ENCODE measurements at regions of chr10 and their contacts with region 1.

Region 1: GRCh38 chr10:24344279-24344678 is 135.3 kb downstream of the KIAA1217 start:
- DNase-seq: peak; percentile 44 to 93
- H3K4me3 ChIP-seq: no peak overlapping the region
- H3K27ac ChIP-seq: peak overlapping the region; percentile 47
- H3K4me1 ChIP-seq: peaks cover 24% of the 10 kb centered on the region
- H3K27me3 ChIP-seq: no peaks in the 10 kb centered on the region
- CTCF ChIP-seq: no peak

Region 2: GRCh38 chr10:24209946-24210491 is 134.3 kb before region 1 on chr10:
- CTCF ChIA-PET with region 1: interaction called, 3 read pairs
- POLR2A ChIA-PET with region 1: no interaction called
- intact Hi-C with region 1: loop called (anchors 1 kb)
- DNase-seq: peak in 1 of 2 experiments; percentile 53
- H3K4me3 ChIP-seq: peak overlapping the region; percentile 47; the same call in 1 of the 2 replicates
- H3K27ac ChIP-seq: 0 out of 2 replicates have a peak overlapping the region, but pooled peaks have one; percentile 77
- H3K4me1 ChIP-seq: peaks cover 38% of the 10 kb centered on the region
- H3K27me3 ChIP-seq: no peaks in the 10 kb centered on the region
- CTCF ChIP-seq: no peak

Region 3: DNA sequence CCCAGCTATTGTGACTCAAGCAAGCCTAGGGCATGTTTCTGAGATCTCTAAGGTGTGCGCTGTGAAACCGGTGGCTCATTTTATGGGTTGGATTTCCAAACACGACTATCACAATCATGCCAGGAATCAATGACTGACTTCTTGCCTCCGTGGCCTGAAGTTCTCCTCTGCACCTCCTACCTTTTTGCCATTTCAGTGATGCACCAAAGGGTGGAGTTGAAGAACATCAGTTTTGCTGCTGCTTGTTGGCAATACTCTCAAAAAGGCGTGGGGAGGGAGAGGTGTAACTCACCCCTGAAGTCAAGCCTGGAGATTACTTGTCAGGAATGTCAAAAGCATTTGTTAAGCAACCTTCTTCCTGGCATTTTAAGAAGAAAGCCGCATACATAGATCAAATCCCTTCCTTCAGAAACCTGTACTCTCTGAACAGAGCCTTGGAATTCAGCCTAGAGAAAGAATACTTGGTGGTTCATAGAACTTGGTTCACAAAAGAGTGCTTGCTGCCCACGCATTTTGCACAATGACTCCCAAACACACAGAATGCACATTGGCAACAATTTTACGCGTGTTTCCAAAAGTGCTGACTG is 94.4 kb before region 1 on chr10:
- CTCF ChIA-PET with region 1: no interaction called
- POLR2A ChIA-PET with region 1: no interaction called
- intact Hi-C with region 1: loop called (anchors 2 kb)
- DNase-seq: peak in 1 of 2 experiments; percentile 51
- H3K4me3 ChIP-seq: no peak overlapping the region
- H3K27ac ChIP-seq: 0 out of 2 replicates have a peak overlapping the region, but pooled peaks have one; percentile 17
- H3K4me1 ChIP-seq: peaks cover 40% of the 10 kb centered on the region
- H3K27me3 ChIP-seq: no peaks in the 10 kb centered on the region
- CTCF ChIP-seq: no peak

Region 4: GRCh38 chr10:24292304-24293293 is 51.7 kb before region 1 on chr10:
- CTCF ChIA-PET with region 1: no interaction called
- POLR2A ChIA-PET with region 1: interaction called, 3 read pairs
- intact Hi-C with region 1: loop called (anchors 1 kb)
- DNase-seq: no peak
- H3K4me3 ChIP-seq: no peak overlapping the region
- H3K27ac ChIP-seq: peak overlapping the region; percentile 55
- H3K4me1 ChIP-seq: peaks cover 13% of the 10 kb centered on the region
- H3K27me3 ChIP-seq: no peaks in the 10 kb centered on the region
- CTCF ChIP-seq: no peak

Region 5: GRCh38 chr10:24331457-24331856 is 12.8 kb before region 1 on chr10:
- CTCF ChIA-PET with region 1: interaction called, 5 read pairs
- POLR2A ChIA-PET with region 1: no interaction called
- intact Hi-C with region 1: loop called (anchors 1 kb)
- DNase-seq: peak; percentile 73 to 82
- H3K4me3 ChIP-seq: peak overlapping the region; percentile 45; the same call in 1 of the 2 replicates
- H3K27ac ChIP-seq: peak overlapping the region; percentile 83
- H3K4me1 ChIP-seq: peaks cover 19% of the 10 kb centered on the region
- H3K27me3 ChIP-seq: no peaks in the 10 kb centered on the region
- CTCF ChIP-seq: no peak

Region 6: DNA sequence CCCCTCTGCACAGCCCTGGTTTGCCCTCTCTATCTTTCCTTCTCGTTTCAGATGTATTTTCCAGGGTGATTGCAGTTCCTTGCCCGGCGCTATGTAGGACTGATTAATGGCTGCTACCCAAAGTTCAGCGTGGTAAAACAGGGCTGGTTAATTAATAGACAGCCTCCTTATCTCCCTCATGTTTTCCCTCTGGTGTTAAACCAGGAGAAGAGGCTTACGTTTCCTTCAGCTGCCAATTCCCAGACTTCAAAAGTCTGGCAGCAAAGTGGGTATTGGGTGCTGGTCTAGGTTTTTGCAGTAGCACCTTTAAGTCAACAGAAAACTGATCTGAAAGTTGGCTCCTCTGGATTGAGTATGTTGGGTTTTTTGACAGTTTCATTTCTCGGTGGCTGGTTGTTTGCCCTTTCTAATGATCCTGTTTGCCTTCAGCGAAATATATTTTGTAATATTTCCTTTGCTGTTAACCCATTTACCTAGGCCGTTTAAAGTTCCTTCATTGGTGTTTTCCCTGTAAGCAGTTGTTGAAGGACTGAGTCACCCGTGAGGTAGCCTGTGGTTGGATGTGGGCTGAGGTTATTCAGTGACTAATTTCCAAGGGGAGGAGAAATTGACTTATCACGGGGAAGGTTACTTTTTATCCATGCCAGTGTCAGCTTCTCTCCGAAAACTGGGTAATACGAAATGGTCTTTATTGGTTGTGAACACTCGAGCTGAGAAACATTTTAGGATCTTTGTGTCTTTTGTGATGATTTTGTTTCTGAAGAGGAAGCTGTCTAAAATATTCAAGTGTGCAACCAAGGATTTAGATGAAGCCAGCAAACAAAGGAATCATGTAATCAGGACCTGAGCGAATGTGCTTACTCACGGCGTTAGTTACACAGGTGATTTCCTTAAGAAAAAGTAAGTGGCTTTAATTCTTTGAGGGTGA is 121.9 kb after region 1 on chr10:
- CTCF ChIA-PET with region 1: no interaction called
- POLR2A ChIA-PET with region 1: no interaction called
- intact Hi-C with region 1: loop called (anchors 1 kb)
- DNase-seq: peak; percentile 62 to 94
- H3K4me3 ChIP-seq: peak overlapping the region; percentile 80
- H3K27ac ChIP-seq: peak overlapping the region; percentile 94
- H3K4me1 ChIP-seq: peaks cover 69% of the 10 kb centered on the region
- H3K27me3 ChIP-seq: no peaks in the 10 kb centered on the region
- CTCF ChIP-seq: no peak

Measured in PC-9 (cell line).